HepG2 (cell line): ENCODE measurements at regions of chr17 and their contacts with region 1.

Region 1: DNA sequence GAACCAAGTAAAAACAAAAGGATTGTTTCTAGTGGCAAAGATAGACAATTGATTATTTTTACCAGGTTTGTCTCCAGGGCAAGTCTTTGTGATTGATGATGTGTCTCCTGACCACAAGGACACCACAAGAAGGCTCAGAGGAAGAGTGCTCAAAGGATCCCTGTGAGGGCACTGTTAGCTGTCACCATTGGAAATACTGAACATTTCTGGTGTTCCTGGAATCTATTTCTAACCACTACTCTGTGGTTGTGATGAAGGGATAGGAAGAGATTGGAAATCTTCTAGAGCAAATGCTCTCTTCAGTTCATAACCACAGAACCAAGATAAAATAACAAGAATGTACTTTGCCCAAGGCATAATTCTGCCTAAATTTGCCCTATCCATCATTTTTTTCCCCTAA is 15.3 kb downstream of the RNF43 start:
- DNase-seq: no peak
- ATAC-seq: no peak
- H3K4me3 ChIP-seq: no peak overlapping the region
- H3K27ac ChIP-seq: peak overlapping the region; percentile 22
- H3K4me1 ChIP-seq: peaks cover 100% of the 10 kb centered on the region
- H3K27me3 ChIP-seq: no peaks in the 10 kb centered on the region
- CTCF ChIP-seq: no peak
- EP300 ChIP-seq: no peak
- POLR2A ChIP-seq: no peak
- RAD21 ChIP-seq: no peak

Region 2: GRCh38 chr17:58391302-58391984 is 10.6 kb before region 1 on chr17:
- CTCF ChIA-PET with region 1: no interaction called
- POLR2A ChIA-PET with region 1: interaction called, 11 read pairs
- in situ Hi-C with region 1: no loop called
- intact Hi-C with region 1: no loop called
- DNase-seq: peak; percentile 100
- ATAC-seq: peak; percentile 96
- H3K4me3 ChIP-seq: peak overlapping the region in 2 of 3 experiments; percentile 8 to 36; a peak in 1 of 6 replicates
- H3K27ac ChIP-seq: peak overlapping the region; percentile 93
- H3K4me1 ChIP-seq: peaks cover 97% of the 10 kb centered on the region
- H3K27me3 ChIP-seq: no peaks in the 10 kb centered on the region
- CTCF ChIP-seq: peak; percentile 24; the same call in 1 of the 2 replicates
- EP300 ChIP-seq: peak; percentile 99 to 100
- POLR2A ChIP-seq: peak; percentile 86 to 95
- RAD21 ChIP-seq: peak; percentile 66; the same call in 1 of the 2 replicates

Region 3: DNA sequence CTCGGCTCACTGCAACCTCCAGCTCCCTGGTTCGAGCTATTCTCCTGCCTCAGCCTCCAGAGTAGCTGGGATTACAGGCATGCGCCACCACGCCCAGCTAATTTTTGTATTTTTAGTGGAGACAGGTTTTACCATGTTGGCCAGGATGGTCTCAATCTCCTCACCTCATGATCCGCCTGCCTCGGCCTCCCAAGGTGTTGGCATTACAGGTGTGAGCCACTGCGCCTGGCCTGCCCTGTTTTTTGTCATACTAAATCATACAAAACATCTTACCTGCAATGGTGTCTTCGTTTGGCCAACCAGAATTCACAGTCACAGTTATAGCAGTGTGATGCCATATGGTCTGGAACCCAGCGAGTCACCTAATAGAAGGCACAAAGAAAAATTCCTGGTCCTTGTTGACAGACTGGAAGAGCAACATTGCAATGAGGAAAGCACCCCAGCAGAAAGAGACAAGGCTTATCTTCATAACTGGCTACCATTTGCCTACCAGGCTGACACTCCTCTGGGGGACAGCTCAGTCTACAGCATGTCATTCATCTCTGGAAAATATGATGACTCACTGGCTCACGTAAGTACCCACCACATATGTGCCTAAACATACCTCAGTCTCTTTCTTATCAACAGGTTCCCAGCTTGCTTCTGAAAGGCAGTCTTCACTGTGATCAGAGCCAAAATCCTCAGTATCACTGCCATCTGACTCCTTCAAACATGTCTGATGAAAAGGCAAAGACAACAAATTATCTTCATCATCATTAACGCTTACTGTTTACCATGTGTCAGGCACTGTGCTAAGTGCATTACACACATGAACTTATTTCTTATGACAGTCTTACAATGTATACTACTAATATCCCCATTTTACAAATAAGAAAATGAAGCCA is 90.4 kb after region 1 on chr17:
- CTCF ChIA-PET with region 1: no interaction called
- POLR2A ChIA-PET with region 1: no interaction called
- in situ Hi-C with region 1: no loop called
- intact Hi-C with region 1: no loop called
- DNase-seq: no peak
- ATAC-seq: no peak
- H3K4me3 ChIP-seq: no peak overlapping the region
- H3K27ac ChIP-seq: no peak overlapping the region
- H3K4me1 ChIP-seq: no peaks in the 10 kb centered on the region
- H3K27me3 ChIP-seq: no peaks in the 10 kb centered on the region
- CTCF ChIP-seq: no peak
- EP300 ChIP-seq: no peak
- POLR2A ChIP-seq: no peak
- RAD21 ChIP-seq: no peak